Panc1 (cell line): ENCODE measurements at regions of chr6 and their contacts with region 1.

Region 1: DNA sequence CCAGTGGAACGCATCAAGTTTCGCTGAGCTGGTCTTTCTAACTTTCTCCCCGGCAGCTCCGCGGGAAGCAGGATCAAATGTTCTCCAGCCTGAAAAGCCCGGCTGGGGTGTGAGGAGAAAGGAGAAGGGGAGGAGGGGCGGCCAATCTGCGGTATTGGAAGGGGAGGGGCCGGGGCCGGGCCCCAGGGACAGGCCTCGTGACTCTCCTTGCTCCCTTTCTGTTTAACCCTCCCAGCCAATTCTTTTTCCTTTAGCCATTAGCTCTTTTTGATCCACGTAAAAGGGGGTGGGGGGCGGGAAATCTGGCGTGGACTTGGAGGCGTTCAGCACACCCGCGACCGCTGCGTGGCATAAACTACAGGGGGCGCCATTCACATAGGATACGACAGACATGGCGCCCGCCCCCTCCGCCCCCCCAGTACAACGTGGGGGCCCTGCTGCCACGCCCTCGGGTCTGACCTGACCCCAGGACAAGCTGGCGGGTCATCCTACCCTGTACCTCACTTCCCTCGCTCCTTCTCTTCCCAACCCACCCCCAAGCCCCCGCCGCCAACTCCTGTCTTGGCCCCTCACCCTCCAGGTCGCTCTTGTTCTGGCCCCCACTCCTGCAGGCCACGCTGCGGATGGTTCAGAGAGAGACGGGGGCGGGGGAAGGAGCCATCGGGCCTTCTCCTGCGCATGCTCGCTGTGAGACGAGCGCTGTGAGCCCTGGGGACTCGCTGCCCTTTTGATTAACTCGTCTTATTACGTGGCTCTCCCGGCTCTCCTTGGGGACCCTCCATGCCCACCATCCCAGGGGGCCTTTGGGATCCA is 7.8 kb upstream of the MDGA1 start:
- DNase-seq: no peak
- ATAC-seq: peak; percentile 81
- H3K4me3 ChIP-seq: peak overlapping the region; percentile 32 to 50
- H3K27ac ChIP-seq: peak overlapping the region; percentile 32; the same call in 1 of the 2 replicates
- H3K4me1 ChIP-seq: peaks cover 5% of the 10 kb centered on the region; the same call in 1 of the 2 replicates
- H3K27me3 ChIP-seq: no peaks in the 10 kb centered on the region
- CTCF ChIP-seq: peak; percentile 76

Region 2: DNA sequence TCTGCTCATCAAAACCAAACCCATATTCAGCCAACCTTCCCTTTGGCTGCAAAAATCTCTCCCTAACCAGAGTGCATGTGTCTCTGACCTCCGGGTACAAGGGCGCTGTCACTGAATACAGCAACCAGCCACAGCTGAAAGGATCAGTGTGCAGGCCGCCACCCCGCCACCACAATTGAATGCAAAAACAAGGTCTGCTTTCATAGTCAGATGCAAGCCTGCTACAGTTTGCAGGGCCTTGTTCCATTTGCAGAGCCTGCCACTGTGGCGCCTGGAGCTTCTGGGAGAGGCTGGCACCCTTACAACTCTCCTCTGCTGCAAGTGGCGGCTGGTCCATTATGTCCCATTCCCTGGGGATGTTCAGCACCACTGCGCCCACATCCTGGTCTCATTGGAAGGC is 31.3 kb before region 1 on chr6:
- CTCF ChIA-PET with region 1: no interaction called
- POLR2A ChIA-PET with region 1: interaction called, 10 read pairs
- in situ Hi-C with region 1: no loop called
- intact Hi-C with region 1: no loop called
- DNase-seq: no peak
- ATAC-seq: no peak
- H3K4me3 ChIP-seq: no peak overlapping the region
- H3K27ac ChIP-seq: no peak overlapping the region
- H3K4me1 ChIP-seq: peaks cover 5% of the 10 kb centered on the region; the same call in 1 of the 2 replicates
- H3K27me3 ChIP-seq: no peaks in the 10 kb centered on the region
- CTCF ChIP-seq: no peak

Region 3: GRCh38 chr6:38012573-38012972 is 307.1 kb after region 1 on chr6:
- CTCF ChIA-PET with region 1: no interaction called
- POLR2A ChIA-PET with region 1: no interaction called
- in situ Hi-C with region 1: no loop called
- intact Hi-C with region 1: loop called (anchors 10 kb)
- DNase-seq: peak; percentile 25
- ATAC-seq: peak; percentile 98
- H3K4me3 ChIP-seq: no peak overlapping the region
- H3K27ac ChIP-seq: no peak overlapping the region
- H3K4me1 ChIP-seq: no peaks in the 10 kb centered on the region
- H3K27me3 ChIP-seq: no peaks in the 10 kb centered on the region
- CTCF ChIP-seq: peak; percentile 91